ENCODE measurements at regions of chr15 and their contacts with region 1.

Region 1: DNA sequence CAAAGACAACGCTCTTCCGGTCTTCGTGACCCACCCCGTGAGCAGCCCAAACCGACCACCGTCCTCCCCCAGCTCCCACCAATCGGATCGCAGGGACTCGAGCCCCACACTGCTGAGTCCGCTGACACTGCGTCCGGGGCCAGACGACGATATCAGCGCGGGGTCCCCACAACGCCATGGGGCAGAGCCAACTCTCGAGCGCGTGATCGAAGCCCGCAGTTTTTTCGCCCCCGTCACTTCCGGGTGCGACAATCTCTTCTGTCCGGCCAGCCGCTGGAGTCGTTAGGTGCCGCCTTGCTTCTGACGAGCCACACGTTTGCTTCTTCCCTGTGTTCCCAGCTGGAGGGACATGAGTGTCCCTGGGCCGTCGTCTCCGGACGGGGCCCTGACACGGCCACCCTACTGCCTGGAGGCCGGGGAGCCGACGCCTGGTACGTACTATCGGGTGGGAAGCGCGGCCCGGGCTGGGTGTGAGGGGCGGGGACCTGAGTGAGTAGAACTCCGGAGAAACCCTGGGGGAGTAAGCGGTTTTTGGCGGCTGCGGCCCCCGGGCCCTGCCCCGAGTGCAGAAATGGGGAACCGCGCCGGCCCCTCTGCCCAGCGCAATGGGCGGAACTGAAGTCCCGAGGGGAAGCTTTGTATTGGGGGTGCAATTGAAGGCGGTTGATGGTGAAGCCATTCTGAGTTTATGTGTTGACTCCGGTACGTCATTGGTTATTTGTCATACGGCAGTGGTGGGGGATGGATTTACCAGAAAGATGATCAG is at the start of gene BLOC1S6:
- DNase-seq: peak; percentile 93
- ATAC-seq: peak; percentile 87
- H3K4me3 Mint-ChIP-seq: peak within 1 kb of the TSS; percentile 99
- H3K27ac Mint-ChIP-seq: peak within 1 kb of the TSS; percentile 100
- H3K4me1 Mint-ChIP-seq: peaks cover 44% of the 10 kb centered on the region
- H3K27me3 Mint-ChIP-seq: no peaks in the 10 kb centered on the region
- CTCF ChIP-seq: no peak
- total RNA-seq, gene BLOC1S6: 39.4 and 41.2 TPM in 2 replicates

Region 2: DNA sequence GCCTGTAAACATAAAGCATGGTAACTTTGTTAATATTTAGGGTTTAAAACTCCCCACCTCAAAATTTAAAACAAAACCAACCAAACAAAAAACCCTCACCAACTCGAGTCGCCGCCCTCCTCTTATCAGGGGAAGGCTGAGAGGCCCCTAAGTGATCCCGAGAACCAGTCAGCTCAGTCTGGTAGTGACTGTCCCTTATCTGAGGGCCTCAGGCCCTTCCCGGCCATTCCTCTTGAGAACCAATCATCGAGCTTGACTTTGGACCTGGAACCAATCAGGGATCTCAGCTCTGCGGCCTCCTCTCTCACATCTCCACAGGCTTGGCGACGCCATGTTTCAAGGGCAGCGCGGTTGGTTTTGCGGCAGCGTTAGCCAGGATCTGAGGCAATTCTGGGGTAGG is 630.9 kb before region 1 on chr15 and contains the start of gene TERB2:
- CTCF ChIA-PET with region 1: no interaction called
- POLR2A ChIA-PET with region 1: no interaction called
- intact Hi-C with region 1: no loop called
- DNase-seq: no peak
- ATAC-seq: no peak
- H3K4me3 Mint-ChIP-seq: no peak within 1 kb of the TSS
- H3K27ac Mint-ChIP-seq: no peak within 1 kb of the TSS
- H3K4me1 Mint-ChIP-seq: no peaks in the 10 kb centered on the region
- H3K27me3 Mint-ChIP-seq: no peaks in the 10 kb centered on the region
- CTCF ChIP-seq: no peak
- total RNA-seq, gene TERB2: not detected in 2 replicates

Region 3: DNA sequence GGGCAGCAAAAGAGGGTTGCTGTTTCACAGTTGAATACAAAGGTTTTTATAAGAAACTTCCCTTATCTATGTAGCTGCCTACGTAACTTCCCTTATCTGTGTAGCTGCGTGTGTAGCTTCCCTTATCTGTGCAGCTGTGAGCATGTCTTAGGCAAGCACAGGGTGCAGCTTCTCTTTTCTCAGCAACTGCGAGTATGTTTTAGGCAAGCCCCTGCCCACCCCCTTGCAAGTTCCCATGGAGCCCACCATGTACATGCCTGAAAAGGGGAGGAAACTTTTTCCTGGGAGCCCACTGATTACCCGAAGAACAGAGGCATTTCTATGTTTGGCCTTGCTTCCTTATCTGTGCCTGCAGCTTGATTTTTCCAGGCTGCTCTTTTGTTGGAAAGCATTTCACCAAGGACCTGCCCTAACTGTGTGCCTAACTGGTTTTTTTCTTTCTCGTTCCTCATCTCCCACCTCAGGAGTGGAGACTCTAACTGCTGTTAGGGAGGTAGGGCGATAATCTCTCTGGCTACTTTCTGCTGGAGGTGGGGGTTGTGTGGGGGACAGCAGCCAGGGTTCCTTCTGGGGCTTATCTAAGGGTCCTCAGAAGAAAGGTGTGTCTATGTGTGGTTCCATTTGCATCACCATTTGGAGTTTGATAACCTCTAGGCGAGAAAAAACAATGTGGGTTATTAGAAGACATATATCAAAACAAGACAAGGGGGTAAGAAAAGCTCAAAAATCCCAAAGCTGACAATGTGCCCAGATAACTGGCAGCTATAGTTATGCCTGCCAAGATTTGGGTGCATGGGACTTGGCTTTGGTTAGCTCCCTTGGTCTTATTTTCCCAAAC is 538.3 kb before region 1 on chr15:
- CTCF ChIA-PET with region 1: no interaction called
- POLR2A ChIA-PET with region 1: interaction called, 3 read pairs
- intact Hi-C with region 1: loop called (anchors 2 kb)
- DNase-seq: no peak
- ATAC-seq: peak; percentile 87
- H3K4me3 Mint-ChIP-seq: peak overlapping the region; percentile 78
- H3K27ac Mint-ChIP-seq: peak overlapping the region; percentile 98
- H3K4me1 Mint-ChIP-seq: peaks cover 39% of the 10 kb centered on the region
- H3K27me3 Mint-ChIP-seq: no peaks in the 10 kb centered on the region
- CTCF ChIP-seq: no peak

Region 4: GRCh38 chr15:45468294-45468693 is 119.0 kb before region 1 on chr15:
- CTCF ChIA-PET with region 1: no interaction called
- POLR2A ChIA-PET with region 1: no interaction called
- intact Hi-C with region 1: no loop called
- DNase-seq: no peak
- ATAC-seq: no peak
- H3K4me3 Mint-ChIP-seq: no peak overlapping the region
- H3K27ac Mint-ChIP-seq: no peak overlapping the region
- H3K4me1 Mint-ChIP-seq: no peaks in the 10 kb centered on the region
- H3K27me3 Mint-ChIP-seq: peaks cover 7% of the 10 kb centered on the region
- CTCF ChIP-seq: no peak

Region 5: GRCh38 chr15:45573961-45574629 is 13.2 kb before region 1 on chr15:
- CTCF ChIA-PET with region 1: interaction called, 5 read pairs
- POLR2A ChIA-PET with region 1: interaction called, 10 read pairs
- intact Hi-C with region 1: no loop called
- DNase-seq: no peak
- ATAC-seq: peak; percentile 40
- H3K4me3 Mint-ChIP-seq: no peak overlapping the region
- H3K27ac Mint-ChIP-seq: no peak overlapping the region
- H3K4me1 Mint-ChIP-seq: peaks cover 26% of the 10 kb centered on the region
- H3K27me3 Mint-ChIP-seq: no peaks in the 10 kb centered on the region
- CTCF ChIP-seq: no peak

Region 6: GRCh38 chr15:45611305-45611704 is 24.0 kb after region 1 on chr15:
- CTCF ChIA-PET with region 1: interaction called, 17 read pairs
- POLR2A ChIA-PET with region 1: interaction called, 8 read pairs
- intact Hi-C with region 1: no loop called
- DNase-seq: no peak
- ATAC-seq: no peak
- H3K4me3 Mint-ChIP-seq: no peak overlapping the region
- H3K27ac Mint-ChIP-seq: no peak overlapping the region
- H3K4me1 Mint-ChIP-seq: peaks cover 12% of the 10 kb centered on the region
- H3K27me3 Mint-ChIP-seq: no peaks in the 10 kb centered on the region
- CTCF ChIP-seq: no peak

Region 7: GRCh38 chr15:45855210-45855906 is 268.1 kb after region 1 on chr15:
- CTCF ChIA-PET with region 1: no interaction called
- POLR2A ChIA-PET with region 1: no interaction called
- intact Hi-C with region 1: no loop called
- DNase-seq: no peak
- ATAC-seq: no peak
- H3K4me3 Mint-ChIP-seq: no peak overlapping the region
- H3K27ac Mint-ChIP-seq: no peak overlapping the region
- H3K4me1 Mint-ChIP-seq: no peaks in the 10 kb centered on the region
- H3K27me3 Mint-ChIP-seq: no peaks in the 10 kb centered on the region
- CTCF ChIP-seq: no peak